Adrenal gland (tissue), 19 donors: ENCODE measurements at regions of chr2 and their contacts with region 1.

Region 1: DNA sequence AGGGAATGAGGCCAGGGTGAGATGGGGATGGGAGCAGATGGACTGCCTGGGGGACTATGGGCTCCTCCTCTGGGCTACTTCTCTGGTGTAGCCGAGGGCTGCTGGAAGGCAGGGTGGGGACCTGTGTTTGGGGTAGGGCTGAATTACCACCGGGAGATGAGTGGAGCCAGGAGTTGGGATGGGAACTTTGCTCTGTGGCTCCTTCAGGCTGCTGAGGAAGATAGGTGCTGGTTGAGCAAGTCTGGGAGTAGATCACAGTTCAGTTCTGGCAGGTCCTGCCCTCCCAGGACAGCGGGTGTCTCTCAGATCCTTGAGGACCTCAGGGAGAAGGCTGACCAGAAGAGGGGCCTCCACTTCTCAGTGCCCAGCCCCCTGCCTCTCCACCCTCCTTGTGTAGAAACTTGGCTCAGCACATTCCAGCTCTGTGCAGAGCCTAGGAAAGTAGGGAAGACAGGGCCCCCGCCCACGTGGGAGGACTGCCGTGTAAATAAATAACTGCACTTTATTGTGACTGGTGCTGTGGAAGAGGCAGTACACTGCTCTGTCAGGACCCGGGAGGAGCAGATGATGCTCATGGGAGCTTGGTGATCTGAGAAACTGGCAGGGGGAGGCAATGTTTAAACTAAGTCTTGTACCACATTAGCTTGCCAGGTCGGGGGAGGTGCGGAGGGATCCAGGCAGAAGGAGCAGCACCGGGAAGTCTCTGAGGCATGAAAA is 15.3 kb downstream of the TET3 start:
- DNase-seq: no peak
- H3K4me3 ChIP-seq: no peak overlapping the region
- H3K27ac ChIP-seq: no peak overlapping the region
- H3K4me1 ChIP-seq: peaks cover 10 to 22% of the 10 kb centered on the region in 2 donors
- H3K27me3 ChIP-seq: no peaks in the 10 kb centered on the region
- CTCF ChIP-seq: no peak
- POLR2A ChIP-seq: no peak

Region 2: DNA sequence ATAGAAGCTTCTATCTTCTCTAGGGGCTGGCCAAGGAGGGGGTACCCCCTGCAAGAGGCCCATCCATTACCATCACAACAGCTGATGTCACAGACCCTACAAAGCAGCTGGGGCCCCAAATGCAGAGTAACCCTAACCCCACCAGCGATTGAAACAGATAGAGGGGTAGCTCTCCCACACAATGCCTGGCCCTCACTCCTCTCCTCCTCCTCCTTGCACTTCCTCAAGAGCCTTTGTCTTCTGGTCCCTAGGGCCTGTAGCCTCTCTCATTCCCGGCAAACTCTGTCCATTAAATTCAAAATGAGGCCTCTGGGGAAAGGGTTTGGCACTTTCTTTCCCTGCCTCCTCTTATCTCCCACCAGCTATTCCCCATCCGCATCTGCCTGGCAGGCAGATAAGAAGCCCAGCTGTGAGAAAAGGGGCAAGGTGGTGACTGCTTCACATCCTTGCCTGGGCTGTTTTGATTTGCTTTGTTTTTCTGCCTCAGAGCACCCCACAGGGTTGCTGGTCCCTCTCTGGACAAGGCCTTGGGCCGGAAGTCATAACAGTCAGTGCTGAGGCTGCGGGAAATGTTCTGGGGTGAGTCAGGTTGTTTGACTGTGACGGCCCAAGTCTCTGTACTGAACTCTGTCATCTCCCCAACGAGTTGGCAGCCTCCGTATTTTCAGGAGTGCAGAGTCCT is 1826.3 kb before region 1 on chr2:
- intact Hi-C with region 1: no loop called
- DNase-seq: no peak
- H3K4me3 ChIP-seq: no peak overlapping the region
- H3K27ac ChIP-seq: no peak overlapping the region
- H3K4me1 ChIP-seq: no peaks in the 10 kb centered on the region
- H3K27me3 ChIP-seq: no peaks in the 10 kb centered on the region
- CTCF ChIP-seq: no peak
- POLR2A ChIP-seq: no peak

Region 3: GRCh38 chr2:74079522-74080341 is 79.7 kb after region 1 on chr2:
- intact Hi-C with region 1: loop called in 1 of 2 experiments (anchors 10 kb)
- DNase-seq: no peak
- H3K4me3 ChIP-seq: no peak overlapping the region
- H3K27ac ChIP-seq: no peak overlapping the region
- H3K4me1 ChIP-seq: no peaks in the 10 kb centered on the region
- H3K27me3 ChIP-seq: no peaks in the 10 kb centered on the region
- CTCF ChIP-seq: no peak
- POLR2A ChIP-seq: no peak

Region 4: DNA sequence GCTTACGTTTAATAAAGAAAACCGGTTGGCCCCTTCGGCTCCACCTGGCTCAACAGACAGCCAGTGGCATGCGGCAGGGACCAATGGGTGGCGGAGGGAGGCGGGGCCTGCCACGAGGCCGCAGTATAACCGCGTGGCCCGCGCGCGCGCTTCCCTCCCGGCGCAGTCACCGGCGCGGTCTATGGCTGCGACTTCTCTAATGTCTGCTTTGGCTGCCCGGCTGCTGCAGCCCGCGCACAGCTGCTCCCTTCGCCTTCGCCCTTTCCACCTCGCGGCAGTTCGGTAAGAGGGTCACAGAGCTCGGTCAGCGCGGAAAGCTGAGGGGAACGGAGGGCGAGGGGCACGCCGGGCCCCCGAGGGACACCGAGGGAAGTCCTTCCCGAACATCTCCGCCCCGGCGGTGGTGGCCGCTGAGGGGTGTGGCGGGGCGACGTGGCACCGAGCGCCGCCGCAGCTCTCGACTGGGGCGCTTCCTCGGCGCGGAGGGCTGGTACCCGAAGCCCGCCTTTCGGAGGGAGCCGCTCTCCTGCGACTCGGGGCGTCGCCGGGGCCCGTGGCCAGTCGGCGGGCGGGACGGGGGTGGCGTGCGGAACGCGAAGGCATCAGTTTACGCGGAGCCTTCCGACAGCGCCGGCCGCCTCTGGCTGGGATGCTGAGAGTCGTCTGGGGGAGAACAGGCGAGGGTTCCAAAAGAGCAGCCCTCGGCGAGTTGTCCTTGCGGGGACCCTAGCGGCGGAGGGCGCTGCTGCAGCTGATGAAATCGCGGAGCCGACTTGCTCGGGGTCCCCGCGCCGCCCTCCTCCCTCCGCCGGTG is 198.6 kb after region 1 on chr2 and contains the start of gene MTHFD2:
- intact Hi-C with region 1: no loop called
- DNase-seq: peak; percentile 80 to 97 (median 92)
- H3K4me3 ChIP-seq: peak within 1 kb of the TSS; percentile 7 to 65 (median 60)
- H3K27ac ChIP-seq: peak within 1 kb of the TSS in 4 of 5 donors; percentile 61 to 92 (median 82)
- H3K4me1 ChIP-seq: peaks cover 14 to 35% of the 10 kb centered on the region in 2 donors
- H3K27me3 ChIP-seq: no peaks in the 10 kb centered on the region
- CTCF ChIP-seq: peak; percentile 49 to 82 (median 66)
- POLR2A ChIP-seq: peak; percentile 39 to 51
- total RNA-seq, gene MTHFD2: 1.6 to 24.9 (median 15.4) TPM